Calu3 (cell line): ENCODE measurements at regions of chr9 and their contacts with region 1.

Region 1: DNA sequence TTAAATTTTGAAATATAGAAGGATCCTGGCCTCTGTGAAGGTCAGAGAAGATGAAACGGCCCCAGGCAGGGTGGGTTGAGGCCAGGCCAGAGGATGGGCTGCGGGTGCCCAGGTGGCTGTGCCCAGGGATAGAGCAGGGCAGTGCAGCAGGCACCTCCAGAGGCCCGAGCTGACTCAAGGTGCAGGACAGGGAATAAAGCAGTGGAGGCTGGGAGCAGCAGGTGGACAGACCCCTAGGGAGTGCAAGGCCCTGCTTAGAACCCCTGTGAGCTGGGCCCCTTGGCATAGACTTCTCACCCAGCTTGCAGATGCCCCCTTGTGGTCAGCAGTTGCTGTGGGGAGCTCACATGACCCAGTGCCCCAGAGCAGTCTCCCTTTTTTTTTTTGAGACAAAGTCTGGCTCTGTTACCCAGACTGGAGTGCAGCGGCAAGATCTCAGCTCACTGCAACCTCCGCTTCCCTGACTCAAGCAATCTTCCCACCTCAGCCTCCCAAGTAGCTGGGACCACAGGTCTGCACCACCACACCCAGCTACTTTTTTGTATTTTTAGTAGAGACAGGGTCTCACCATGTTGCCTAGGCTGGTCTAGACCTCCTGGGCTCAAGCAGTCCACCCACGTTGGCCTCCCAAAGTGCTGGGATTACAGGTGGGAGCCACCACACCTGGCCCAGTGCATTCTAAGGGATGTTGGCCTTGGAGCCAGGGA is 118.8 kb downstream of the WNK2 start:
- DNase-seq: peak; percentile 60
- H3K4me3 Mint-ChIP-seq: no peak overlapping the region
- H3K27ac Mint-ChIP-seq: no peak overlapping the region
- H3K4me1 Mint-ChIP-seq: no peaks in the 10 kb centered on the region
- H3K27me3 Mint-ChIP-seq: no peaks in the 10 kb centered on the region
- CTCF ChIP-seq: peak; percentile 45

Region 2: GRCh38 chr9:93159601-93160471 is 142.9 kb before region 1 on chr9:
- CTCF ChIA-PET with region 1: interaction called, 3 read pairs
- intact Hi-C with region 1: loop called (anchors 2 kb)
- DNase-seq: peak; percentile 90
- H3K4me3 Mint-ChIP-seq: no peak overlapping the region
- H3K27ac Mint-ChIP-seq: no peak overlapping the region
- H3K4me1 Mint-ChIP-seq: no peaks in the 10 kb centered on the region
- H3K27me3 Mint-ChIP-seq: no peaks in the 10 kb centered on the region
- CTCF ChIP-seq: peak; percentile 75

Region 3: GRCh38 chr9:93193148-93193755 is 109.5 kb before region 1 on chr9:
- CTCF ChIA-PET with region 1: interaction called, 11 read pairs
- intact Hi-C with region 1: no loop called
- DNase-seq: peak; percentile 57
- H3K4me3 Mint-ChIP-seq: peak overlapping the region; percentile 19
- H3K27ac Mint-ChIP-seq: no peak overlapping the region
- H3K4me1 Mint-ChIP-seq: peaks cover 58% of the 10 kb centered on the region
- H3K27me3 Mint-ChIP-seq: no peaks in the 10 kb centered on the region
- CTCF ChIP-seq: no peak

Region 4: DNA sequence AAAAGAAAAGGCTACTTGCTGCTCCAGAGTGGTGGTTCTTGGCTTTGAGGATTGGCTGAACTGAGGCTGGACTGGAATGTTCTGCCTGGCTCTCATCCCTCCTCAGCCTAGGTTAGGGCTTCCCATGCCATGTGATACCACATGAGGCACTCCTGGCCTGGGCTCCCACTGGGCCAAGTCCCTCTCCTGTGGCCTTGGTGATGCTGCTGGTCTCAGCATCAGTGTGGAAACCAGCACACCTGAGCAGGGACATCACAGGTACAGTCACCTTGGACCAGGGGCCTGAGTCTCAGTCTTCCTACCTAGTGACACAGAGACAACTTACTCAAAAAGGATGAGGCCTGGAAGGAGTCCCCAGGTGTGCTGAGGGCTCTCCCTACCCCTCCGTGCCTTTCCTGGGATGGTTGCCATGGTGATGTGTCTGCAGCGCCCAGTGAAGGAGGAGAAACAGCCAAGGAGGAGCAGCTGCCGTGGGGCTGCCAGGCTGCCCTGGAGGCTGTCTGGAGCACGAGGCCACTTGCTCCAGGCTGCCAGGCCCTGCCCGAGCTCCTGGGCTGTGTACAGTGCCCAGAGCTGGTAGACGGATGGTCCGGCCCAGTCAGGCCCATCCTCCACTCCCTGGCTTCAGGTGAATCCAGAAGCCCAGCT is 47.8 kb before region 1 on chr9:
- CTCF ChIA-PET with region 1: no interaction called
- intact Hi-C with region 1: no loop called
- DNase-seq: no peak
- H3K4me3 Mint-ChIP-seq: no peak overlapping the region
- H3K27ac Mint-ChIP-seq: no peak overlapping the region
- H3K4me1 Mint-ChIP-seq: no peaks in the 10 kb centered on the region
- H3K27me3 Mint-ChIP-seq: no peaks in the 10 kb centered on the region
- CTCF ChIP-seq: no peak